Naive thymus-derived CD4-positive, alpha-beta T cell (primary cell): ENCODE measurements at regions of chr3 and their contacts with region 1.

Region 1: GRCh38 chr3:172039436-172040077 is at the start of gene FNDC3B:
- DNase-seq: peak; percentile 76 to 92 (median 89)
- ATAC-seq: peak; percentile 96
- H3K4me3 ChIP-seq: peak within 1 kb of the TSS; percentile 64
- H3K4me3 Mint-ChIP-seq: peak within 1 kb of the TSS; percentile 96 to 100 (median 98)
- H3K27ac ChIP-seq: peak within 1 kb of the TSS; percentile 97
- H3K27ac Mint-ChIP-seq: peak within 1 kb of the TSS; percentile 94 to 99 (median 97)
- H3K4me1 ChIP-seq: peaks cover 11 to 15% of the 10 kb centered on the region in 2 donors
- H3K4me1 Mint-ChIP-seq: peaks cover 27 to 73% (median 55%) of the 10 kb centered on the region in 7 donors
- H3K27me3 ChIP-seq: no peaks in the 10 kb centered on the region
- H3K27me3 Mint-ChIP-seq: peaks cover 0 to 19% (median 0%) of the 10 kb centered on the region in 5 donors
- total RNA-seq, gene FNDC3B: 21.1 to 78.6 (median 29.4) TPM

Region 2: DNA sequence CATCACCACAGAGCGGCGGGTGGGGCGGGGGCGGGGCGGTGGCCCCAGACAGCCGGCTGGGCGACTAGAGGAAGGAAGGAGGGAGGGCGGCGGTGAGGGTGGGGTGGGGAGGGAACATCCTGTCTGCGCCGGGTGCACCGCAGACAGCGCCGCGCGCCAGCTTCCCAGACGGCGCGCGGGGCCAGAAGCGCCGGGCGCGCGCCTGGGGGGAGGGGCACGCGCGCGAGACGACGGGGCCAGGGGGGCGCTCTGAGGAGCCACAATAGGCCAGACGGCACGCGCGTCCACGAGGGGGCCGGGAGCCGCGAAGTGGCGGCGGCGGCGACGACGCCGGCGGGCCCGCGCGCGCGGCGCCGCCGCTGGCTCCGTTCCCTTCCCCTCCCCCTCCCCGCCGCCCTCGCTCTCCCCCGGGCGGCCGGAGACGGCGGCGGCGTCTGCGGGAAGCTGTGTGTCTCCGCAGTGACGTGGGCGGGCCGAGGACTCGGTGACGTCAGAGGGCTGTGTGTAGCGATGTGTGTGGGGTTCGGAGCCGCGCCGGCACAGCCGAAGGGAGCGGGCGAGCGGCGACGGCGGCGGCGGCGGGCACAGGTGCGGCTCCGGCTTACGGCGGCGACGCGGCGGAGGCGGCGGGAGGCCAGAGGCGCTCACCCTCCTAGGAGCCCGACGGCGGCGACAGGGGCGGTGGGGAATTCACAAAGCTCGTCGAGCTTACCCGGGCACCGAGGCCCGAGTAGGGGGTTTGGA is 1682.2 kb before region 1 on chr3 and contains the start of gene SKIL:
- CTCF ChIA-PET with region 1: no interaction called
- POLR2A ChIA-PET with region 1: no interaction called
- intact Hi-C with region 1: loop called (anchors 5 kb)
- DNase-seq: peak; percentile 93 to 98 (median 96)
- ATAC-seq: peak; percentile 84
- H3K4me3 ChIP-seq: peak within 1 kb of the TSS; percentile 63
- H3K4me3 Mint-ChIP-seq: peak within 1 kb of the TSS; percentile 80 to 96 (median 94)
- H3K27ac ChIP-seq: peak within 1 kb of the TSS; percentile 99
- H3K27ac Mint-ChIP-seq: peak within 1 kb of the TSS; percentile 91 to 99 (median 97)
- H3K4me1 ChIP-seq: peaks cover 7 to 13% of the 10 kb centered on the region in 2 donors
- H3K4me1 Mint-ChIP-seq: peaks cover 28 to 68% (median 60%) of the 10 kb centered on the region in 7 donors
- H3K27me3 ChIP-seq: no peaks in the 10 kb centered on the region
- H3K27me3 Mint-ChIP-seq: peaks cover 0 to 26% (median 0%) of the 10 kb centered on the region in 5 donors
- total RNA-seq, gene SKIL: 19.1 to 80.5 (median 40.9) TPM

Region 3: GRCh38 chr3:172061724-172062184 is 22.2 kb after region 1 on chr3:
- CTCF ChIA-PET with region 1: no interaction called
- POLR2A ChIA-PET with region 1: no interaction called
- intact Hi-C with region 1: no loop called
- DNase-seq: no peak
- ATAC-seq: peak; percentile 84
- H3K4me3 ChIP-seq: no peak overlapping the region
- H3K4me3 Mint-ChIP-seq: peak overlapping the region in 6 of 10 donors; percentile 2 to 27 (median 11)
- H3K27ac ChIP-seq: no peak overlapping the region
- H3K27ac Mint-ChIP-seq: peak overlapping the region in 1 of 9 donors; percentile 45
- H3K4me1 ChIP-seq: peaks cover 0 to 9% of the 10 kb centered on the region in 2 donors
- H3K4me1 Mint-ChIP-seq: peaks cover 21 to 72% (median 51%) of the 10 kb centered on the region in 7 donors
- H3K27me3 ChIP-seq: no peaks in the 10 kb centered on the region
- H3K27me3 Mint-ChIP-seq: no peaks in the 10 kb centered on the region

Region 4: GRCh38 chr3:172087602-172088580 is 48.3 kb after region 1 on chr3:
- CTCF ChIA-PET with region 1: no interaction called
- POLR2A ChIA-PET with region 1: interaction called, 3 read pairs
- intact Hi-C with region 1: loop called in 1 of 2 experiments (anchors 5 kb)
- DNase-seq: no peak
- ATAC-seq: no peak
- H3K4me3 ChIP-seq: no peak overlapping the region
- H3K4me3 Mint-ChIP-seq: peak overlapping the region in 6 of 10 donors; percentile 22 to 79 (median 32)
- H3K27ac ChIP-seq: no peak overlapping the region
- H3K27ac Mint-ChIP-seq: peak overlapping the region in 5 of 9 donors; percentile 11 to 85 (median 56)
- H3K4me1 ChIP-seq: peaks cover 0 to 13% of the 10 kb centered on the region in 2 donors
- H3K4me1 Mint-ChIP-seq: peaks cover 14 to 58% (median 37%) of the 10 kb centered on the region in 7 donors
- H3K27me3 ChIP-seq: no peaks in the 10 kb centered on the region
- H3K27me3 Mint-ChIP-seq: no peaks in the 10 kb centered on the region

Region 5: GRCh38 chr3:172227340-172228035 is 187.9 kb after region 1 on chr3:
- CTCF ChIA-PET with region 1: interaction called, 10 read pairs
- POLR2A ChIA-PET with region 1: no interaction called
- intact Hi-C with region 1: no loop called
- DNase-seq: no peak
- ATAC-seq: no peak
- H3K4me3 ChIP-seq: no peak overlapping the region
- H3K4me3 Mint-ChIP-seq: no peak overlapping the region
- H3K27ac ChIP-seq: no peak overlapping the region
- H3K27ac Mint-ChIP-seq: peak overlapping the region in 2 of 9 donors; percentile 25 to 45
- H3K4me1 ChIP-seq: no peaks in the 10 kb centered on the region
- H3K4me1 Mint-ChIP-seq: peaks cover 0 to 9% (median 3%) of the 10 kb centered on the region in 7 donors
- H3K27me3 ChIP-seq: no peaks in the 10 kb centered on the region
- H3K27me3 Mint-ChIP-seq: no peaks in the 10 kb centered on the region

Region 6: GRCh38 chr3:172341482-172342059 is 302.0 kb after region 1 on chr3:
- CTCF ChIA-PET with region 1: interaction called, 11 read pairs
- POLR2A ChIA-PET with region 1: no interaction called
- intact Hi-C with region 1: loop called (anchors 1 kb)
- DNase-seq: peak in 7 of 9 donors; percentile 30 to 73 (median 67)
- ATAC-seq: peak; percentile 85
- H3K4me3 ChIP-seq: no peak overlapping the region
- H3K4me3 Mint-ChIP-seq: no peak overlapping the region
- H3K27ac ChIP-seq: no peak overlapping the region
- H3K27ac Mint-ChIP-seq: no peak overlapping the region
- H3K4me1 ChIP-seq: no peaks in the 10 kb centered on the region
- H3K4me1 Mint-ChIP-seq: peaks cover 0 to 2% (median 0%) of the 10 kb centered on the region in 7 donors
- H3K27me3 ChIP-seq: no peaks in the 10 kb centered on the region
- H3K27me3 Mint-ChIP-seq: no peaks in the 10 kb centered on the region

Region 7: GRCh38 chr3:172666873-172667694 is 627.5 kb after region 1 on chr3:
- CTCF ChIA-PET with region 1: interaction called, 4 read pairs
- POLR2A ChIA-PET with region 1: no interaction called
- intact Hi-C with region 1: loop called (anchors 1 to 5 kb)
- DNase-seq: peak; percentile 38 to 78 (median 67)
- ATAC-seq: peak; percentile 96
- H3K4me3 ChIP-seq: no peak overlapping the region
- H3K4me3 Mint-ChIP-seq: peak overlapping the region in 5 of 10 donors; percentile 0 to 47 (median 21)
- H3K27ac ChIP-seq: no peak overlapping the region
- H3K27ac Mint-ChIP-seq: peak overlapping the region in 2 of 9 donors; percentile 35 to 43
- H3K4me1 ChIP-seq: peaks cover 4 to 11% of the 10 kb centered on the region in 2 donors
- H3K4me1 Mint-ChIP-seq: peaks cover 11 to 18% (median 15%) of the 10 kb centered on the region in 7 donors
- H3K27me3 ChIP-seq: no peaks in the 10 kb centered on the region
- H3K27me3 Mint-ChIP-seq: peaks cover 0 to 12% (median 0%) of the 10 kb centered on the region in 5 donors